ENCODE measurements at regions of chr14 and their contacts with region 1.

Region 1: GRCh38 chr14:87944987-87945604 is 47.9 kb downstream of the GALC start:
- DNase-seq: no peak
- ATAC-seq: no peak
- H3K4me3 Mint-ChIP-seq: no peak overlapping the region
- H3K27ac Mint-ChIP-seq: no peak overlapping the region
- H3K4me1 Mint-ChIP-seq: no peaks in the 10 kb centered on the region
- H3K27me3 Mint-ChIP-seq: no peaks in the 10 kb centered on the region

Region 2: DNA sequence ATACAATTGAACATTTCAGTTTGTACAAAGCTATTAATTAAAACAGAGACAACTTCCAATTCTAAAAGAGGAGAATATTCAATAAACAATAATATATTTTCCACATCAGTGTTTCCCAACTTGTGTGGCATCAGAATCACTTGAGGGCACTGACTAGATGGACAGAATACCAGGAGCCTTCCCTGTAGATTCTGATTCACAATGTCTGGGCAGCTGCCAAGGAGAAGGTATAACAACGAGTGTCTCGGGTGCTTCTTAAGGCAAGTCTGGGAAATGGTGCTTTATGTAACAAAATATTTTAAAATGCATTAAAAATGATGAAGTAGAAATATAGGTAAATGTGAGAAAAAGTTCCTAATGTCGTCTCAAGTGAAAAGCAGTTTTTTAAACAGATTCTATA is 21.7 kb after region 1 on chr14:
- CTCF ChIA-PET with region 1: interaction called, 15 read pairs
- POLR2A ChIA-PET with region 1: no interaction called
- intact Hi-C with region 1: no loop called
- DNase-seq: no peak
- ATAC-seq: no peak
- H3K4me3 Mint-ChIP-seq: no peak overlapping the region
- H3K27ac Mint-ChIP-seq: no peak overlapping the region
- H3K4me1 Mint-ChIP-seq: no peaks in the 10 kb centered on the region
- H3K27me3 Mint-ChIP-seq: no peaks in the 10 kb centered on the region

Region 3: DNA sequence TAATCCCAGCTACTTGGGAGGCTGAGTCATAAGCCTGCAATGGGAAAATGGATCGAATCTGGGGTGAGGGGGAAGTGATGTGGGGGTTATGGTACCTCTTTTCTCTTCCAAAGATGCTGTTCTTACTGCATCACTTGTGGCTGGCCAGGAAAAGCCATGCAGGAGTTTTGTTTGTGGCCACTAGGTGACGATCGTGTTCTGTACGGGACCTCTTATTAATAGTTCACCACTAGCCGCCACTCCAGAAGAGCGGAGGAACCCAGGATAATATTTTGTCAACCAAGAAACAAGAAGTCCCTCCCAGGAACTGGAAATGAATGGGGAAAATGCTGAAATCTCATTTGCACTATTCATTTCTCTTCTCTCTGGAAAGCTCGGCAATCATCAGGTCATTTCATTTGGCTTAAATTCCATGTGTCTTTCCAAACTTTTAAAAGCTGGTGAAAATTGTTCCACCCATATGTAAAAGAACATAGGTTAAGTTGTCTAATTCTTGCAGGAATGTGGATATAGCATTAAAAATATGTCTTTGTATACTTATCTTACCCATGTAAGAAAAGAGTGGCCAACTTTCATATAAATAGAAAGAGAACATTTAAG is 68.8 kb after region 1 on chr14:
- CTCF ChIA-PET with region 1: interaction called, 12 read pairs
- POLR2A ChIA-PET with region 1: no interaction called
- intact Hi-C with region 1: loop called in 1 of 2 experiments (anchors 5 kb)
- DNase-seq: peak; percentile 50
- ATAC-seq: peak; percentile 58
- H3K4me3 Mint-ChIP-seq: no peak overlapping the region
- H3K27ac Mint-ChIP-seq: no peak overlapping the region
- H3K4me1 Mint-ChIP-seq: peaks cover 63% of the 10 kb centered on the region
- H3K27me3 Mint-ChIP-seq: no peaks in the 10 kb centered on the region

Region 4: GRCh38 chr14:88181072-88181471 is 236.0 kb after region 1 on chr14:
- CTCF ChIA-PET with region 1: interaction called, 15 read pairs
- POLR2A ChIA-PET with region 1: no interaction called
- intact Hi-C with region 1: loop called in 1 of 2 experiments (anchors 5 kb)
- DNase-seq: no peak
- ATAC-seq: peak; percentile 68
- H3K4me3 Mint-ChIP-seq: no peak overlapping the region
- H3K27ac Mint-ChIP-seq: no peak overlapping the region
- H3K4me1 Mint-ChIP-seq: peaks cover 5% of the 10 kb centered on the region
- H3K27me3 Mint-ChIP-seq: no peaks in the 10 kb centered on the region

Region 5: GRCh38 chr14:88233915-88234314 is 288.8 kb after region 1 on chr14:
- CTCF ChIA-PET with region 1: interaction called, 3 read pairs
- POLR2A ChIA-PET with region 1: no interaction called
- intact Hi-C with region 1: loop called (anchors 1 to 5 kb)
- DNase-seq: peak; percentile 28
- ATAC-seq: peak; percentile 26
- H3K4me3 Mint-ChIP-seq: no peak overlapping the region
- H3K27ac Mint-ChIP-seq: no peak overlapping the region
- H3K4me1 Mint-ChIP-seq: no peaks in the 10 kb centered on the region
- H3K27me3 Mint-ChIP-seq: peaks cover 11% of the 10 kb centered on the region

Region 6: DNA sequence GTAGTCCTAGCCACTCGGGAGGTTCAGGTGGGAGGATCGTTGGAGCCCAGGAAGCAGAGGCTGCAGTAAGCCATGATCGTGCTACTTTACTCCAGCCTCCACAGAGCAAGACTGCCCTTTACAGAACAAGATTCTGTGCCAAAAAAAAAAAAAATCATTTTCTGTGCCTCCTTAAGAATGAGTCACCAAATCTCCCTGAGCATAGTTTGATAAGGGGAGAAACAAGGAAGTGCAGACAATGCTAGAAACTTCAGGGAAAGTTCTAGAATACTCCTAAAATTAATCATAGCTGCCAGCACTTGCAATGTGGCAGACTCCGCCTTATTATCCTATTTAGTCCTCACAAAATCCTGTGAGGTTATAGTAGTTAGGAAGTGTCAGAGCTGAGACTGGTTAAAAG is 303.5 kb after region 1 on chr14:
- CTCF ChIA-PET with region 1: no interaction called
- POLR2A ChIA-PET with region 1: no interaction called
- intact Hi-C with region 1: no loop called
- DNase-seq: no peak
- ATAC-seq: no peak
- H3K4me3 Mint-ChIP-seq: no peak overlapping the region
- H3K27ac Mint-ChIP-seq: no peak overlapping the region
- H3K4me1 Mint-ChIP-seq: no peaks in the 10 kb centered on the region
- H3K27me3 Mint-ChIP-seq: peaks cover 26% of the 10 kb centered on the region

Region 7: DNA sequence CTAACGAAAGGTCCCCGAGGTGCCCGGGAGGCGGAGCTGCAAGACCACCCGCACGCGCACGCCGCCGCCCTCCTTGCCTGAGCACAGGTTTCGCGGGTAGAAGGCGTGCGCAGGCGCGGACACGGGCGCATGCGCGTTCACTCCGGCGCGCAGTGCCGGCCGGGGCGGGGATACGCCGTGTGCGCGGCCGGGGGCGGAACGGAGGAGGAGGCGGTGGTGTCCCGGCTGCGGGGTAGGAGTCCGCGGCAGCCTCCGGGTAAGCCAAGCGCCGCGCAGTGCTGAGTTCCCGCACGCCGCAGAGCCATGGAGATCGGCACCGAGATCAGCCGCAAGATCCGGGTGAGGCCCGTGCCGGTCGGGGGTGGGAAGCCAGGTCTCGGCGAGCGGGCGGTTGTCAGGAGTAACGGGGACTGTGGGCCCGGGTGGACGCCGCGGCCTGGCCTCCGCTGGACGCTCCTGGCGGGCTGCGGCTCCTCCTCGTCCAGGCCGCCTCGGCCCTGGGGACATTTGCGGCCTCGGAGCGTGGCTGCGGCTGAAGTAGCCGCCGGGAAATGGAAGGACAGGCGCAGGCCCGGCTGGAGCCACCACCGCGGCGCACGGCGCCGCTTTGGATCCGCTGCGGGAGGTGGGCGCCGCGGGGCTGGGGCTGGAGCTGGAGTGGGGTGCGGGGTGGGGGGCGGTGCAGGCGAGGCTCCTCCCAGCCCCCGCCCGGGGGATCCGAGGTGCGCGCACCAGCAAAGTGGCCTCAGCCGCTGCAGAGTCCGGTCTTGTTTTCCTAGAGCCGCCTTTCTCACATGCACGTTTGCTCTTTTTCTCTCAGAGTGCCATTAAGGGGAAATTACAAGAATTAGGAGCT is 618.0 kb after region 1 on chr14 and contains the start of gene ZC3H14:
- CTCF ChIA-PET with region 1: no interaction called
- POLR2A ChIA-PET with region 1: no interaction called
- intact Hi-C with region 1: loop called in 1 of 2 experiments (anchors 10 kb)
- DNase-seq: peak; percentile 91
- ATAC-seq: peak; percentile 94
- H3K4me3 Mint-ChIP-seq: peak within 1 kb of the TSS; percentile 83
- H3K27ac Mint-ChIP-seq: peak within 1 kb of the TSS; percentile 92
- H3K4me1 Mint-ChIP-seq: peaks cover 31% of the 10 kb centered on the region
- H3K27me3 Mint-ChIP-seq: peaks cover 12% of the 10 kb centered on the region
- total RNA-seq, gene ZC3H14: 46.9 to 63.6 TPM